BJ (cell line): ENCODE measurements at regions of chr20 and their contacts with region 1.

Region 1: DNA sequence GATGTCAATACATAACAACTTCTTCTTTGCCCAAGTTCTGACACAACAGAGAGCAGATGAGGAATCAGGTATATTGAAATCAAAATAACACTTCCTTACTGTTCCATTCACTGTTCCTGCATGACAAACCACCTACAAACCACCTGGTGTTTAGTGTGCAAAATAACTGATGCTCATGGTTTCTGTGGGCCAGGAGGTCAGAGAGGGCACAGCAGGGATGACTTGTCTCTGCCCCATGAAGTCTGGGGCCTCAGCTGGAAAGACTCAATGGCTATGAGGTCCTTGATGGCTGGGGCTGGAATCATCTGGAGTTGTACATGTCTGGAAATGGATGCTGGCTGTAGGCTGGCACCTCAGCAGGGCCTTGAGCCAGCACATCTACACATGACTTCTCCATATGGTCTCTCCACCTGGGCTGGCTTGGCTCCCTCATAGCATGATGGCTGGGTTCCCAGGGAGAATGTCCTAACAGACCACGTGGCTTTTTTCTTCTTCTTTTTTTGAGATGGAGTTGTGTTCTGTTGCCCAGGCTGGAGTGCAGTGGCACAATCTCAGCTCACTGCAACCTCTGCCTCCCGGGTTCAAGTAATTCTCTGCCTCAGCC is 7.4 kb upstream of the COX4I2 start:
- DNase-seq: no peak
- H3K4me3 ChIP-seq: no peak overlapping the region
- H3K27me3 ChIP-seq: no peaks in the 10 kb centered on the region
- CTCF ChIP-seq: no peak

Region 2: DNA sequence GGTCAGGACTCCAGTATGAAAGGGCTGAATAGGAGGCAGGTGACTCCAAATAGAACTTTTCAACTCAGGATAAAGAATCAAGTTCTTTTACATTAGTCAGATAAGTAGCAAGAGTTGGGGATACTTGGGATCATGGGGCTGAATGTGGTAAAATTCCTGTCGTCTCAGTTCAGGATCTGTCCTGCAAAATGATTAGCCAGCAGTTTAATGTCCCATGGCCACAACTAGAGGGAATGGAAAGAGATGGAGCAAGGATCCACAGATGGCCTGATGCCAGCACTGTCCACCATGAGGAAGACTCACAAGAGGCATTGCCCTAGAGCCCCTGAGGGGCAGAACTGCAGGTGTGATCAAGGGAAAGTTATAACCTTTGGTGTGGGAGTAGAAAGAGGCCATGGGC is 226.4 kb before region 1 on chr20:
- CTCF ChIA-PET with region 1: no interaction called
- POLR2A ChIA-PET with region 1: no interaction called
- DNase-seq: no peak
- H3K4me3 ChIP-seq: no peak overlapping the region
- H3K27me3 ChIP-seq: 0 out of 2 replicates have a peak, but pooled peaks cover 2% of the 10 kb centered on the region
- CTCF ChIP-seq: no peak

Region 3: DNA sequence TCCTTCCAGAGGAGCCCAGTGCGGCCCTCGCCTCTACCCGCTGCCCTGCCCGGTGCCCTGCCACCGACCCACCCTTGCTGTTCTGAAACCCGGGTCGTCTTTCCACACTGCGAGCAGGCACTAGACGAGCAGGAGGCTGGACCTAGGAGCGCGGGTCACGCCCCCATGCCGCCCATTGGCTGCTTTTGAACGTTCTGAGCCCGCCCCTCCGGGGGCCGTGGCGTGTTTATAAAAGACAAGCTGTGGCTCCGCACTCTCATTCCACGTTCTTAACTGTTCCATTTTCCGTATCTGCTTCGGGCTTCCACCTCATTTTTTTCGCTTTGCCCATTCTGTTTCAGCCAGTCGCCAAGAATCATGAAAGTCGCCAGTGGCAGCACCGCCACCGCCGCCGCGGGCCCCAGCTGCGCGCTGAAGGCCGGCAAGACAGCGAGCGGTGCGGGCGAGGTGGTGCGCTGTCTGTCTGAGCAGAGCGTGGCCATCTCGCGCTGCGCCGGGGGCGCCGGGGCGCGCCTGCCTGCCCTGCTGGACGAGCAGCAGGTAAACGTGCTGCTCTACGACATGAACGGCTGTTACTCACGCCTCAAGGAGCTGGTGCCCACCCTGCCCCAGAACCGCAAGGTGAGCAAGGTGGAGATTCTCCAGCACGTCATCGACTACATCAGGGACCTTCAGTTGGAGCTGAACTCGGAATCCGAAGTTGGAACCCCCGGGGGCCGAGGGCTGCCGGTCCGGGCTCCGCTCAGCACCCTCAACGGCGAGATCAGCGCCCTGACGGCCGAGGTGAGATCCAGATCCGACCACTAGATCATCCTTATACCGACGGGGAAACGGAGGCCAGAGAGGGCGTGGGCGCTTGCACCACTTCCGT is 25.0 kb before region 1 on chr20 and contains the start of gene ID1:
- CTCF ChIA-PET with region 1: no interaction called
- POLR2A ChIA-PET with region 1: no interaction called
- DNase-seq: peak; percentile 70
- H3K4me3 ChIP-seq: peak within 1 kb of the TSS; percentile 76
- H3K27me3 ChIP-seq: no peaks in the 10 kb centered on the region
- CTCF ChIP-seq: no peak
- polyA plus RNA-seq, gene ID1: 126 and 135 TPM in 2 replicates

Region 4: GRCh38 chr20:31644701-31645100 is 14.4 kb after region 1 on chr20:
- CTCF ChIA-PET with region 1: interaction called, 33 read pairs
- POLR2A ChIA-PET with region 1: no interaction called
- DNase-seq: no peak
- H3K4me3 ChIP-seq: no peak overlapping the region
- H3K27me3 ChIP-seq: peaks cover 1% of the 10 kb centered on the region; the same call in 1 of the 2 replicates
- CTCF ChIP-seq: no peak

Region 5: DNA sequence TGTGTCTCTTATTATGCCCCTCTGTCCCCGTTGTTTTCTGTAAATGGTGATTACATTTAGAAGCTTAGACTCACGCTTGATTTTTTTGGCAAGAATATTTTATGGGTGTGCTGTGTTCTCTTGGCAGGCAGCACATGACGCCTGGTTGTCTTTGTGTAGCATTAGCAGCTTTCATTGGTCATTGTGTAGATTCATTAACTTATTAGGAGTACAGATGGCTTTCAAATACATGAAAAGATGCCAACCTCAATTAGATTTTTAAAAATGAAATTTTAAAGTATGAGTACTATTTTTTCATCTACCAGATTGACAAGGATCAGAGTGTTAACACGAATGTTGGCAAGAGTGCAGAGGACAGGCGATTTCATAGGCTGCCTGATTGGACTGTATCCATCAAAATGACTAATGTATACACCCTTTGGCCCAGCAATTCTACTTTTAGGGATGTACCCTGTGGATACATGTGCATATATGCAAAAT is 22.7 kb after region 1 on chr20:
- CTCF ChIA-PET with region 1: interaction called, 33 read pairs
- POLR2A ChIA-PET with region 1: no interaction called
- DNase-seq: peak; percentile 39
- H3K4me3 ChIP-seq: no peak overlapping the region
- H3K27me3 ChIP-seq: no peaks in the 10 kb centered on the region
- CTCF ChIP-seq: no peak

Region 6: GRCh38 chr20:31698803-31699718 is 68.8 kb after region 1 on chr20:
- CTCF ChIA-PET with region 1: no interaction called
- POLR2A ChIA-PET with region 1: no interaction called
- DNase-seq: peak; percentile 91
- H3K4me3 ChIP-seq: no peak overlapping the region
- H3K27me3 ChIP-seq: no peaks in the 10 kb centered on the region
- CTCF ChIP-seq: no peak

Region 7: GRCh38 chr20:31811796-31812728 is 181.8 kb after region 1 on chr20:
- CTCF ChIA-PET with region 1: no interaction called
- POLR2A ChIA-PET with region 1: no interaction called
- DNase-seq: no peak
- H3K4me3 ChIP-seq: no peak overlapping the region
- H3K27me3 ChIP-seq: no peaks in the 10 kb centered on the region
- CTCF ChIP-seq: no peak